Mucosa of descending colon (tissue), 3 donors: ENCODE measurements at regions of chr22 and their contacts with region 1.

Region 1: GRCh38 chr22:46542011-46542985 is 4.9 kb upstream of the CELSR1 start:
- DNase-seq: peak; percentile 75 to 85 (median 79)
- ATAC-seq: peak; percentile 91
- H3K4me3 ChIP-seq: no peak overlapping the region
- H3K4me1 ChIP-seq: peaks cover 26% of the 10 kb centered on the region
- CTCF ChIP-seq: peak; percentile 91

Region 2: GRCh38 chr22:46355371-46355995 is 186.8 kb before region 1 on chr22:
- intact Hi-C with region 1: loop called in 1 of 2 experiments (anchors 10 kb)
- DNase-seq: peak in 2 of 3 donors; percentile 76 to 81
- ATAC-seq: peak; percentile 70
- H3K4me3 ChIP-seq: no peak overlapping the region
- H3K4me1 ChIP-seq: no peaks in the 10 kb centered on the region
- CTCF ChIP-seq: no peak

Region 3: GRCh38 chr22:46367707-46368191 is 174.5 kb before region 1 on chr22:
- intact Hi-C with region 1: loop called in 1 of 2 experiments (anchors 5 kb)
- DNase-seq: peak; percentile 74 to 91 (median 90)
- ATAC-seq: peak; percentile 82
- H3K4me3 ChIP-seq: no peak overlapping the region
- H3K4me1 ChIP-seq: peaks cover 8% of the 10 kb centered on the region
- CTCF ChIP-seq: peak; percentile 90